ENCODE measurements at regions of chr15 and their contacts with region 1.

Region 1: DNA sequence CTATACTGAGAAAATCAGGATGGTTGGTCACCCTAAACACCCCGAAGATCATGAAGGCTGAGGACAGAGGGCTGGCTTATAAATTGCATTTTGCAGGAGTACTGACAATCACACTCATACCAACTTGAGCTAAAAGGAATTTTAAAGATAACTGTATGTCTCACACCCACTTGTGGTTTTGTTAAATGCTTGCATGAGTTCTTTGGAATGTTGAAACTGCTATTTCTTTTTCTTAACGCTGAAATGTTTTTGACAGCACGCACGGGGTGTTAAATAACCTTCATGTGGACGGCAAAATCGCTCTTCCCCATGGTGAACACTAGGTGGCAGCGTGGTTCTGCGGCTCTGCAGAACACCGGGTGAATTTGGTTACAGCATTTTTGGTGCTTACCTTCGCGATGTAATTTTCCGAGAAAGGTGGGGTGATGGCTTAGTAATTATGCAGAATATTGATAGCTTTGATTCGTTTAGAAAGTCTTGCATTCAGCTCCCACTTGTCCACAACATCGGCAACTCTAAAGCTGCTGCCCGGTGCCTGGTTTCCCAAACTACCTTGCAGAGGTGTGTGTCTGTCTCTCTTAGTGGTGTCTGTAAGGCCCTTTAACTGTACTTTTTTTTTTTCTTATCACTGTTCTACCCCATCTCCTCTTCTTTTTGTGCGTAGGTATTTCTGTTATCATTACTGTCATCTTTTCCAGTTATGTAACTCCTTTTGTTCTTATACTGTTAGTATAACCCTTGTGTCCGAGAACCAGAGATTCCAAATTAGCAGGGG is 51.7 kb downstream of the ARNT2 start:
- DNase-seq: peak; percentile 75
- H3K4me3 Mint-ChIP-seq: peak overlapping the region; percentile 24
- H3K27ac Mint-ChIP-seq: no peak overlapping the region
- H3K4me1 Mint-ChIP-seq: peaks cover 26% of the 10 kb centered on the region
- H3K27me3 Mint-ChIP-seq: peaks cover 9% of the 10 kb centered on the region
- CTCF ChIP-seq: peak; percentile 90

Region 2: GRCh38 chr15:80512726-80513660 is 57.1 kb after region 1 on chr15:
- CTCF ChIA-PET with region 1: interaction called, 6 read pairs
- intact Hi-C with region 1: loop called (anchors 1 kb)
- DNase-seq: peak; percentile 41
- H3K4me3 Mint-ChIP-seq: no peak overlapping the region
- H3K27ac Mint-ChIP-seq: no peak overlapping the region
- H3K4me1 Mint-ChIP-seq: no peaks in the 10 kb centered on the region
- H3K27me3 Mint-ChIP-seq: no peaks in the 10 kb centered on the region
- CTCF ChIP-seq: no peak

Region 3: DNA sequence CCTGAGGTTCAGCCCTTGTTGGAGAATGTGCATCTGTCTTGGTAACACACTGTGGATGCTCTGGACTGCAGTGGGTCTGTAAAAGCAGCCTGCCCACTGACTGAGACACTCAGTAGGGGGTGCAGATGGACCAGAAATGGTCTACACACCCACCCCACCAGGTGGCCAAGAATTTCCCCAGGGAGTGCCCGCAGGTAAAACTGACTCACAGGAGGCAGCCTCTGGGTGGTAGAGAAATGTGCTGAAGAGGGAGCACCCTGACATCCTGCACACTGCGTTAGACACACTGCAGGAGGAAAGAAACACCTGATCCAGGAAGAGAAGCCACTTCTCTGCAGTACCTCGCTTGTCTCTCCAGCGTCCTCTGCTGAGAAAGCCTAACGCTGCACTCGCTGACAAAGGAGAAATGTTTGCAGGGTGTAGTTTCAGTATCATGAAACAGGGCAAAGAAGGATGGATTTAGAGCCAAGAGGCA is 129.7 kb after region 1 on chr15:
- CTCF ChIA-PET with region 1: interaction called, 18 read pairs
- intact Hi-C with region 1: loop called (anchors 1 kb)
- DNase-seq: peak; percentile 77
- H3K4me3 Mint-ChIP-seq: no peak overlapping the region
- H3K27ac Mint-ChIP-seq: peak overlapping the region; percentile 65
- H3K4me1 Mint-ChIP-seq: peaks cover 57% of the 10 kb centered on the region
- H3K27me3 Mint-ChIP-seq: no peaks in the 10 kb centered on the region
- CTCF ChIP-seq: peak; percentile 50

Measured in Calu3 (cell line).